ENCODE measurements at regions of chr1 and their contacts with region 1.

Region 1: DNA sequence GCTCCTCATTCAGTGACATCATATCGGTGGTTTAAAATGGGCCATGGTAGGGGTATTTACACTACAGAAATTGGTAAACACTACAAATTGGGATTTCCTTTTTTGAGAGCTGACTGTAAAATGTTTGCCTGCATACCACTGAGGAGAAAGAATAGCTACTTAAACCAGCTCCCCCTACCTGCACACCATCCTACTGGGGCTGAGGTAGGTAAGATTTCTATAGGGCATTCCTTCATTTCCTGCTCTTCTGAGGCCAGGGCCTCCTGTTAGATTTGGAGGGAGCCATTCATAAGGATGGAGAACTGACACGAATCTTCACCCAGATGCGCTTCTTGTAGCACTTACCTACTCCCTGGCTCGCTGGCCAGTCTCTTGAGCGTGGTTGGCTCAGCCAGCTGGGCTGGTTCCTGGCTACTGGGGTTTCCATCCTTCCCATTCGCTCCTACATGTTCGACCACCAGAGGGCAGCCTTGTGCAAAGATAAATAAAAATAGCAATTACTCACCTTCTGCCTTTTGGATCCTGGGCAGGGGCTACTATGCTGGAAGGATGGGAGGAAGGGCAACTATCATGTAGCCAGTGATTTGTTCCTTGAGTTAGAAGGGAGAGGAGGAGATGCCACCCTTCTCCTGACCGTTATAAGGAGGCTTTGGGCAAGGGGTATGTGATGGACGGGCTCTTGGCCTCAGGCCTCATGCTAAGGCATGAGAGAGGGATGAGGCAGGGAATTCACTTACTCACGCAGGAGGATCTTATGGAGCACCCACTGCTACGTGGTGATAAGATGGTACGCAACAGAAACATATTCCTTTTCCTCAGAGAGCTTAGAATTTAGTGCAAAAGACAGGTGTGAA is 10.7 kb downstream of the OPTC start:
- DNase-seq: peak; percentile 80
- ATAC-seq: peak; percentile 80
- H3K4me3 ChIP-seq: no peak overlapping the region
- H3K27ac ChIP-seq: no peak overlapping the region; the same call in 1 of the 2 replicates
- H3K4me1 ChIP-seq: peaks cover 28% of the 10 kb centered on the region
- H3K27me3 ChIP-seq: no peaks in the 10 kb centered on the region
- CTCF ChIP-seq: peak; percentile 83
- POLR2A ChIP-seq: peak; percentile 51; the same call in 1 of the 2 replicates
- RAD21 ChIP-seq: peak; percentile 89

Region 2: DNA sequence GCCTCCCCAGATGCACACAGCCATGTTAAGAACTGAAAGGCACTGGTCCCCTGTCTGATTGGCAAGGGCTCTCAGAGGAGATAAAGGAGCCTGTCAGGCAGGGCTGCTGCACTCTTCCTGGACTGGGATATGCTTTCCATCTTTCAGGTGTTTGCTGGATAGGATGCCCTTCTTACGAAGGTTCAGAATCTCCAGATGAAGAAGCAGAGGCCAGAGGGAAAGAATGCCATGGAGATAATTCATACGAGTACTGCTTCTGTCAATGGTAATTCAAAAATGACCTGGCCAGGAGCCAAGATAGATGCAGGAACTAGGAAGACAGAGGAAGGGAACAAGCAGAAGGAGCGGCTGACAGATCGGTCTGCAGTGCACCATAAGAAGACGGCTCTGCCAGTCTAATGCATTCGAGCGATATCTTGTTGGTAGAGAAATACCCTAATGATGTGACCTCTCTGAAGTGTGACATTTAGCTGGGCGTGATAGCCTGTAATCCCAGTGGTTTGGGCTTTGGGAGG is 105.4 kb after region 1 on chr1:
- CTCF ChIA-PET with region 1: interaction called, 3 read pairs
- POLR2A ChIA-PET with region 1: no interaction called
- dilution Hi-C with region 1: no loop called
- in situ Hi-C with region 1: no loop called
- intact Hi-C with region 1: loop called (anchors 5 kb)
- DNase-seq: no peak
- ATAC-seq: no peak
- H3K4me3 ChIP-seq: no peak overlapping the region
- H3K27ac ChIP-seq: no peak overlapping the region
- H3K4me1 ChIP-seq: peaks cover 15% of the 10 kb centered on the region
- H3K27me3 ChIP-seq: no peaks in the 10 kb centered on the region
- CTCF ChIP-seq: no peak
- POLR2A ChIP-seq: no peak
- RAD21 ChIP-seq: no peak

Region 3: GRCh38 chr1:203692565-203693470 is 188.2 kb after region 1 on chr1:
- CTCF ChIA-PET with region 1: interaction called, 6 read pairs
- POLR2A ChIA-PET with region 1: no interaction called
- dilution Hi-C with region 1: no loop called
- in situ Hi-C with region 1: no loop called
- intact Hi-C with region 1: loop called (anchors 2 kb)
- DNase-seq: peak; percentile 96
- ATAC-seq: peak; percentile 87
- H3K4me3 ChIP-seq: no peak overlapping the region
- H3K27ac ChIP-seq: peak overlapping the region; percentile 59
- H3K4me1 ChIP-seq: peaks cover 14% of the 10 kb centered on the region
- H3K27me3 ChIP-seq: no peaks in the 10 kb centered on the region
- CTCF ChIP-seq: 0 out of 2 replicates have a peak, but pooled peaks have one; percentile 6
- POLR2A ChIP-seq: no peak; the same call in 1 of the 2 replicates
- RAD21 ChIP-seq: no peak; the same call in 1 of the 2 replicates

Region 4: DNA sequence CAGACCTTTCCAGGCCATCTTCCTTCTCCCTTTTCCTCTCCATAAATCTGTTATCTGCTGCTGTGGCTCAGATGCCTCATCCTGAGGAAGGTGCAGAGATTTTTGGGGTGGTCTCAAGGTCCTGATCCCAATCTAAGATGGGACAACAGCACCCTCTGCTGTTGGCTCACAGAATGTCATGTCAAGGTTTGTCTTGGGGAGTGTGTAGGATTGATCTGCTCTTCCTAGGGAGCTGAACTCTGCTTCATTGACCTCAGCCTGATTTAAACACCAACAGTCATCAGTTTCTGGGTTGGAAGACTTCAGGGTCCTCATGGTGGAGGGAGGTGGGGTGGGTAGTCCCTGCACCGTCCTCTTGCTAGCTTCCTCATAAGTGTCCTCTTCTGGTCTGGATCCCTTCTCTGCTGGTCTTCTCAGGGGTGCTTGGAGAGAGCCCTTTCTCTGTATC is 197.5 kb after region 1 on chr1:
- CTCF ChIA-PET with region 1: interaction called, 12 read pairs
- POLR2A ChIA-PET with region 1: no interaction called
- dilution Hi-C with region 1: no loop called
- in situ Hi-C with region 1: loop called (anchors 5 kb)
- intact Hi-C with region 1: loop called (anchors 1 kb)
- DNase-seq: peak; percentile 56
- ATAC-seq: peak; percentile 71
- H3K4me3 ChIP-seq: no peak overlapping the region
- H3K27ac ChIP-seq: no peak overlapping the region
- H3K4me1 ChIP-seq: no peaks in the 10 kb centered on the region
- H3K27me3 ChIP-seq: no peaks in the 10 kb centered on the region
- CTCF ChIP-seq: peak; percentile 71
- POLR2A ChIP-seq: no peak
- RAD21 ChIP-seq: peak; percentile 89

Measured in IMR-90 (cell line).